Activated CD8-positive, alpha-beta T cell treated with anti-CD3 and anti-CD28 coated beads, Interleukin-2, amount 10 ng/mL, durations not matched to agents 7 days and 5 days (primary cell): ENCODE measurements at regions of chr7 and their contacts with region 1.

Region 1: GRCh38 chr7:26090927-26091519 is 61.0 kb upstream of the NFE2L3 start:
- DNase-seq: peak; percentile 37
- ATAC-seq: no peak
- H3K4me3 Mint-ChIP-seq: peak overlapping the region; percentile 5
- H3K27ac Mint-ChIP-seq: peak overlapping the region; percentile 0
- H3K4me1 Mint-ChIP-seq: peaks cover 26% of the 10 kb centered on the region
- H3K27me3 Mint-ChIP-seq: no peaks in the 10 kb centered on the region

Region 2: GRCh38 chr7:25894902-25895791 is 195.9 kb before region 1 on chr7:
- CTCF ChIA-PET with region 1: interaction called, 70 read pairs
- POLR2A ChIA-PET with region 1: no interaction called
- DNase-seq: peak; percentile 65
- ATAC-seq: peak; percentile 77
- H3K4me3 Mint-ChIP-seq: peak overlapping the region; percentile 24
- H3K27ac Mint-ChIP-seq: no peak overlapping the region
- H3K4me1 Mint-ChIP-seq: peaks cover 35% of the 10 kb centered on the region
- H3K27me3 Mint-ChIP-seq: peaks cover 26% of the 10 kb centered on the region

Region 3: DNA sequence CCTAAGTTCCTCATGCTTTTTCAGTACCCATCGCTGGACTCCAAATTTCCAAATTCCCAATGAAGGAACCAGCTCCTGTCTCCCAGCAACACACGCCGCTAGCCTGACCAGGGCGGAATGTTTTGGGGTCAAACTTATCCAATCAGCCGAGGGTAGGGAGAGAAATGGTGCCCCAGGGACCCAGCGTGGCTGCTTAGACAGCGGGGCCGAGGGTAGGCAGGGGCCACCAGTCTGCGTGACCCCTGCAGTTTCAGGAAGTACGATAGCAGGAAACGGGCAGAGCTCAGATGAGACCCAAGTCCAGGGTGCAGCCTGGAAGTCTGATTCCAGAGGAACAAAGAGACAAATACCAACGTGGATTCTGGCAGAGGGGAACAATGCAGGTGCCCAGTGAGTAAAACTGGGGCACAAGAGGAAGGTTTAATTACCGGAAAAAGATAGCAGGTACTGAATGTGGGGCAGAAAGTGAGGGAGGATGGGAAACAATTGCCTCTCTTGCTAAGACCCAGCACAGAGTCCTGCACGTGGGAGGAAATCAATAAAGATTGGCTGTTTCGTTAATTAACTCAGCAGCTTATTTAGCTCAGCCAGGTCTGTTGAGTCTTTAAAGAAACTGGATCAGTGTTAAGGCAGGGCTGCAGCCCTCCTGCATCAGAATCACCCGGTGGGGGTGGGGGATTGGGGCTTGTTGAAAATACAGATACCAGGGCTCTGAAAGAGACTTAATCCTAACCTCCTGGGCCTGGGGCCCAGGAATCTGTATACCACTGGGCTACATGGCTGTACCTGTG is 10.5 kb after region 1 on chr7:
- CTCF ChIA-PET with region 1: interaction called, 11 read pairs
- POLR2A ChIA-PET with region 1: interaction called, 3 read pairs
- DNase-seq: no peak
- ATAC-seq: no peak
- H3K4me3 Mint-ChIP-seq: peak overlapping the region; percentile 40
- H3K27ac Mint-ChIP-seq: peak overlapping the region; percentile 78
- H3K4me1 Mint-ChIP-seq: peaks cover 39% of the 10 kb centered on the region
- H3K27me3 Mint-ChIP-seq: no peaks in the 10 kb centered on the region

Region 4: GRCh38 chr7:26127411-26127810 is 36.4 kb after region 1 on chr7:
- CTCF ChIA-PET with region 1: interaction called, 29 read pairs
- POLR2A ChIA-PET with region 1: no interaction called
- DNase-seq: no peak
- ATAC-seq: no peak
- H3K4me3 Mint-ChIP-seq: no peak overlapping the region
- H3K27ac Mint-ChIP-seq: no peak overlapping the region
- H3K4me1 Mint-ChIP-seq: no peaks in the 10 kb centered on the region
- H3K27me3 Mint-ChIP-seq: peaks cover 13% of the 10 kb centered on the region

Region 5: GRCh38 chr7:26160881-26161280 is 69.9 kb after region 1 on chr7:
- CTCF ChIA-PET with region 1: interaction called, 40 read pairs
- POLR2A ChIA-PET with region 1: no interaction called
- DNase-seq: no peak
- ATAC-seq: no peak
- H3K4me3 Mint-ChIP-seq: no peak overlapping the region
- H3K27ac Mint-ChIP-seq: no peak overlapping the region
- H3K4me1 Mint-ChIP-seq: peaks cover 54% of the 10 kb centered on the region
- H3K27me3 Mint-ChIP-seq: no peaks in the 10 kb centered on the region

Region 6: DNA sequence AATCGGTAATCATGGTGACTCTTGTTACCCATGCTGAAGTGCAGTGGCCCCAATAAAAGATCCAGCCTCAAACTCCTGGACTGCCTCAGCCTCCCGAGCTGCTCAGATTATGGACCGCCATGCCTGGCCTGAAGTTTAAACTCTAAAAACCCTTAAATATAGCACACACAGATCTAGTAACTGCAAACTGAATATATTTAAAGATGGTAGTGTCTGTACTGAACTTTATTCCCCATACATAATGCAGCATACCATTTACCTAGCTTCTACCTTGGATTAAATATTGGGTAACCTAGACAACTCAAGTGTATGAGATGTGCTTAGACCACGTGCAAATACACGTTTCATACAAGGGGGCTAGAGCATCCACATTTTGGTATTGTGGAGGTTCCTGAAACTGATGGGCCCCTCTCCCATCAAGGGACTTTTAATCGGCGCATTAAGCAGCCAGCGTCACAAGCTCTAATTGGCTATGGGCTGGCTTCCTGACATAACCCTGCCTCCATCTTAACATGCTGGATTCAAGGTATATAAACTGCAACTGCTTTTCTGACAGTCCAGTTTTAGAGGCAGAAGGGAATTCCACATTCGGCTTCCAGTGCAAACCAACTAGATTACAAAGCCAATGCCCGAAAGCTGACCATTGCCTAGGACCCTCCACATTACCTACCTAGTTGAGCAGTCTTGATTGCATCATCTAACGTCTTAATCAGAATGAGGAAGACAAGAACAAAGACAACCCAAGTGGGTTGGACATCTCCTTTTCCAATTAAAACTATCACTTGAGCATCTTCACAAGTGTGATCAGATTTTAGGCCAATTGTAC is 96.6 kb after region 1 on chr7:
- CTCF ChIA-PET with region 1: interaction called, 222 read pairs
- POLR2A ChIA-PET with region 1: interaction called, 187 read pairs
- DNase-seq: no peak
- ATAC-seq: peak; percentile 13
- H3K4me3 Mint-ChIP-seq: peak overlapping the region; percentile 6
- H3K27ac Mint-ChIP-seq: peak overlapping the region; percentile 67
- H3K4me1 Mint-ChIP-seq: peaks cover 71% of the 10 kb centered on the region
- H3K27me3 Mint-ChIP-seq: no peaks in the 10 kb centered on the region

Region 7: GRCh38 chr7:26365077-26365900 is 274.3 kb after region 1 on chr7:
- CTCF ChIA-PET with region 1: interaction called, 37 read pairs
- POLR2A ChIA-PET with region 1: no interaction called
- DNase-seq: peak; percentile 71
- ATAC-seq: peak; percentile 77
- H3K4me3 Mint-ChIP-seq: no peak overlapping the region
- H3K27ac Mint-ChIP-seq: peak overlapping the region; percentile 48
- H3K4me1 Mint-ChIP-seq: peaks cover 16% of the 10 kb centered on the region
- H3K27me3 Mint-ChIP-seq: no peaks in the 10 kb centered on the region